ENCODE measurements at regions of chr22 and their contacts with region 1.

Region 1: DNA sequence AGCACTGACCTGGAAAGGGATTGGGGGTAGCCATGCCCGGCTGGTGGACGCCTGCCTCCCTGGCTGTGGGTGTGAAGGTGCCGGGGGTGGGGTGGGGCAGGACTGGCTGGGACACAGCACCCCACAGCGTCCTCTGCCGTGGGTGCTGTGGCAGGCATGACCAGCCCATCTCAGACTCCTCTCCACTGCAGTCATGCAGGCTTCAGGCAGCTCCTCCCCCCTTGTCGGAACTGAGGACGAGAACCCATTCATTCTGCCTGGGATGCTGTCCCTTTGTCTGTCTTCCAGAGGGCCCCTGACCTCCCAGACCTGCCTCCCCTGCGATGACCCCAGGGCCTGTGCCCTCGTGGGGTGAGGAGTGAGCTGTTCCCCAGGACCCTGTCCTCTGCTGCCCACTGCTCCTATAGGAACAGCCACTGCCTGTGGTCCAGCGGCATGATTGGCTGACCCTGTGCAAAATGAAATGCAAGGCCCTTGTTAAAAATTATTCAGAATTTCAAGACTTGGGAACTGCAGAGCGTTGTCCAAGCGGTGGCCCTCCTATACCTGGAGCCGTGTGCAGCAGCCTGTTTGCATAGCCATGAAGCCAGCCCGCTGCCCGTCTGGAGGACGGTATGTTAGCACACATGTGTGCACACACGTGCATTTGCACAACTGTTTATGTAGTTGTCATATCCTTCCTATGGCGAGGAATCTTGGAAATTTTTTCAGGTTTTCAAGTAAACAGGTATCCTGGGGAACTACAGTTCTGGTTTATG is 1122.3 kb downstream of the BRD1 start:
- DNase-seq: no peak
- ATAC-seq: no peak
- H3K4me3 ChIP-seq: no peak overlapping the region
- H3K27ac ChIP-seq: no peak overlapping the region
- H3K4me1 ChIP-seq: no peaks in the 10 kb centered on the region
- H3K27me3 ChIP-seq: no peaks in the 10 kb centered on the region
- CTCF ChIP-seq: no peak
- POLR2A ChIP-seq: no peak

Region 2: DNA sequence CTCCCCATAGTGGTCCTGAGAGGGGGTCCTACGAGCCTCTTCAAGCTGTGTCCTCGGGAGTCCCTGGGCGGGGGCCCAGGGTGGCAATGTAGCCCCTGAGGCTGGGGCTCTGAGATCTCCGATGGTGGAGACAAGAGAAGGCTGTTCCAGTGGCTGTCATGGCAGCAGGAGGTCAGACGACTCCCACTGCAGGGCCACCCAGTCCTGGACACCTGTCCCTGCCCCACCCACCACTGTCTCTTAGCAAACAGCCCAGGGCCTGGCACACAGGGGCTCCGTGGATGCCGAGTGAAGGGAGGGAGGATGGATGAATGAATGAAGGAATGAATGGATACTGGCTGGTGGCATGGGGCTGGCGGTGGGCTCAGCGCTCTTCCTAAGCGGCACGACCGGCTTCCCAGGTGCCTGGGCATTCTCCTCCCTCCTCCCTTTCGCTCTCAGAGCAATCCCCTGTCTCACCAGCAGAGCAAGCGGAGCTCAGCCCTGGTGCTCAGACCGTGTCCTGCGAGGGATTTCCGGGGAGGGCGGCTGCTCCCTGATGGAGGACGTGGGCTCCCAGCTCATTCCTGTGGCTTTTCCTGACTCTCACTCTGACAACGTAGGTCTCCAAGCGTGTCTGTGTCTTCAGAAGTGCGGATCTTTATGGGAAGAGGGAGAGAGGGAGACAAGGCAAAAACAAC is 150.3 kb before region 1 on chr22:
- in situ Hi-C with region 1: no loop called
- intact Hi-C with region 1: loop called (anchors 5 kb)
- DNase-seq: no peak
- ATAC-seq: no peak
- H3K4me3 ChIP-seq: no peak overlapping the region
- H3K27ac ChIP-seq: no peak overlapping the region
- H3K4me1 ChIP-seq: no peaks in the 10 kb centered on the region
- H3K27me3 ChIP-seq: no peaks in the 10 kb centered on the region
- CTCF ChIP-seq: no peak
- POLR2A ChIP-seq: no peak

Region 3: GRCh38 chr22:48757985-48758561 is 52.7 kb after region 1 on chr22:
- in situ Hi-C with region 1: no loop called
- intact Hi-C with region 1: no loop called
- DNase-seq: no peak
- ATAC-seq: no peak
- H3K4me3 ChIP-seq: no peak overlapping the region
- H3K27ac ChIP-seq: no peak overlapping the region
- H3K4me1 ChIP-seq: no peaks in the 10 kb centered on the region
- H3K27me3 ChIP-seq: no peaks in the 10 kb centered on the region
- CTCF ChIP-seq: no peak
- POLR2A ChIP-seq: no peak